ENCODE measurements at regions of chr1 and their contacts with region 1.

Region 1: DNA sequence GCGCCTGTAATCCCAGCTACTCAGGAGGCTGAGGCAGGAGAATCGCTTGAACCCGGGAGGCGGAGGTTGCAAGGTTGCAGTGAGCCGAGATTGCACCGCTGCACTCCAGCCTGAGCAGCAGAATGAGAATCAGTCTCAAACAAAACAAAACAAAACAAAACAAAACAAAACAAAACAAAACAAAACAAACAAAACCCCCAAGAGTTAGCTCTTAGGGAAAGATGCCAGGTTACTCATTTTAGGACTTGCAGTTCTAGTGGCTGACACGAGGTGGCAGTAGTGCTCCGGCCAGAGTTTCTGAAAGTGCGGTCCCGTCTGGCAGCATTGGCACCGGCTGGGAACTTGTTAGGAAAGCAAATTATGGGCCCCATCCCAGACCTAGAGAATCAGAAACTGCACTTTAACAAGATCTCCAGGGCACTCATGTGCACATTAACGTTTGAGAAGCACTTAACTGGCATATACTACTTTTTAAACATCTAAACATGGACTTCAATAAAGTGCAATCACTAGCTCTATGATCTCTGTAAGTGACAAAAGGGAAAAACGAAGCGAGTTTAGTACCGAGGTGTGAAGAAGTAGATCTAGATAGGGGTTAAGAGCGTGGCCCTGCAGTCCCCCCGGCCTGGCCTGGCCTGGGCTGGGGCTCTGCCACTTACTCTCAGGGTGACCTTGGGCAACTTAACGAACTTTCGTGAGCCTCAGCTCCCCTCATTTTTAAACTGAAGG is 41.9 kb upstream of the TNFRSF1B start:
- DNase-seq: peak; percentile 46
- ATAC-seq: peak; percentile 53
- H3K4me3 ChIP-seq: no peak overlapping the region
- H3K27ac ChIP-seq: no peak overlapping the region
- H3K4me1 ChIP-seq: peaks cover 7% of the 10 kb centered on the region
- H3K27me3 ChIP-seq: peaks cover 5 to 25% of the 10 kb centered on the region in 2 experiments
- CTCF ChIP-seq: peak; percentile 88
- EP300 ChIP-seq: no peak
- POLR2A ChIP-seq: no peak
- RAD21 ChIP-seq: peak; percentile 89

Region 2: GRCh38 chr1:11805447-11806306 is 319.2 kb before region 1 on chr1 and contains the starts of genes CLCN6 and MTHFR:
- CTCF ChIA-PET with region 1: no interaction called
- POLR2A ChIA-PET with region 1: no interaction called
- in situ Hi-C with region 1: no loop called
- intact Hi-C with region 1: no loop called
- DNase-seq: peak; percentile 98
- ATAC-seq: peak; percentile 92
- H3K4me3 ChIP-seq: peak within 1 kb of the TSS; percentile 86 to 88 (median 87)
- H3K27ac ChIP-seq: peak within 1 kb of the TSS; percentile 94
- H3K4me1 ChIP-seq: peaks cover 69% of the 10 kb centered on the region
- H3K27me3 ChIP-seq: no peaks in the 10 kb centered on the region; a peak in 1 of 5 replicates
- CTCF ChIP-seq: peak; percentile 18; the same call in 1 of the 2 replicates
- EP300 ChIP-seq: peak in 1 of 2 experiments; percentile 48; a peak in 1 of 4 replicates
- POLR2A ChIP-seq: peak; percentile 70 to 82
- RAD21 ChIP-seq: peak; percentile 55; the same call in 1 of the 2 replicates
- total RNA-seq, gene CLCN6: 10.1 and 19.3 TPM in 2 replicates
- total RNA-seq, gene MTHFR: 5.0 and 8.2 TPM in 2 replicates

Region 3: GRCh38 chr1:11822096-11822495 is 302.8 kb before region 1 on chr1:
- CTCF ChIA-PET with region 1: no interaction called
- POLR2A ChIA-PET with region 1: no interaction called
- in situ Hi-C with region 1: no loop called
- intact Hi-C with region 1: no loop called
- DNase-seq: no peak
- ATAC-seq: no peak
- H3K4me3 ChIP-seq: no peak overlapping the region
- H3K27ac ChIP-seq: no peak overlapping the region
- H3K4me1 ChIP-seq: no peaks in the 10 kb centered on the region
- H3K27me3 ChIP-seq: no peaks in the 10 kb centered on the region
- CTCF ChIP-seq: no peak
- EP300 ChIP-seq: no peak
- POLR2A ChIP-seq: no peak
- RAD21 ChIP-seq: no peak

Region 4: DNA sequence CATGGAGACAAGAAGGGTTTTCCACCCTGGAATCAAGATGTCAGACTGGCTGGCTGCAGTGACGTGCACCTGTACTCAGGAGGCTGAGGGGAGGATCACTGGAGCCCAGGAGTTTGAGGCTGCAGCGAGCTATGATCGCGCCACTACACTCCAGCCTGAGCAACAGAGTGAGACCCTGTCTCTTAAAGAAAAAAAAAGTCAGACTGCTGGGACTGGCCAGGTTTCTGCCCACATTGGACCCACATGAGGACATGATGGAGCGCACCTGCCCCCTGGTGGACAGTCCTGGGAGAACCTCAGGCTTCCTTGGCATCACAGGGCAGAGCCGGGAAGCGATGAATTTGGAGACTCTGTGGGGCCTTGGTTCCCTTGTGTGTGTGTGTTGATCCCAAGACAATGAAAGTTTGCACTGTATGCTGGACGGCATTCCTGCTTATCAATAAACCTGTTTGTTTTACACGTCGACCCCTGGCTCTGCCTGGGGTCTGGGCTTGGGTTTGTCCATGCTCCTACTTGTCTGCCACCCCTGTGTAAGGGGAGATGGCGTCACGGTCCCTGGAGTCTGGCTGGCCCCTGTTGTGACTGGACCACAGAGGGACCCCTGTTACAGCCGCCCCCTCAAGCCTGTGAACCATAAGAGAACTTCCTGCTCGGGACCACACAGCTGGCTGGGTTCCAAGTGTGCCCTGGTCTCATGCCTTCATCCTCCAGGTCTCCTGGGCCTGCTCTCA is 84.1 kb after region 1 on chr1:
- CTCF ChIA-PET with region 1: interaction called, 93 read pairs
- POLR2A ChIA-PET with region 1: no interaction called
- in situ Hi-C with region 1: loop called (anchors 5 kb)
- intact Hi-C with region 1: loop called (anchors 1 kb)
- DNase-seq: peak; percentile 56
- ATAC-seq: peak; percentile 93
- H3K4me3 ChIP-seq: no peak overlapping the region
- H3K27ac ChIP-seq: no peak overlapping the region
- H3K4me1 ChIP-seq: no peaks in the 10 kb centered on the region
- H3K27me3 ChIP-seq: no peaks in the 10 kb centered on the region
- CTCF ChIP-seq: peak; percentile 94
- EP300 ChIP-seq: no peak
- POLR2A ChIP-seq: no peak
- RAD21 ChIP-seq: peak; percentile 92